ENCODE measurements at regions of chr21 and their contacts with region 1.

Region 1: DNA sequence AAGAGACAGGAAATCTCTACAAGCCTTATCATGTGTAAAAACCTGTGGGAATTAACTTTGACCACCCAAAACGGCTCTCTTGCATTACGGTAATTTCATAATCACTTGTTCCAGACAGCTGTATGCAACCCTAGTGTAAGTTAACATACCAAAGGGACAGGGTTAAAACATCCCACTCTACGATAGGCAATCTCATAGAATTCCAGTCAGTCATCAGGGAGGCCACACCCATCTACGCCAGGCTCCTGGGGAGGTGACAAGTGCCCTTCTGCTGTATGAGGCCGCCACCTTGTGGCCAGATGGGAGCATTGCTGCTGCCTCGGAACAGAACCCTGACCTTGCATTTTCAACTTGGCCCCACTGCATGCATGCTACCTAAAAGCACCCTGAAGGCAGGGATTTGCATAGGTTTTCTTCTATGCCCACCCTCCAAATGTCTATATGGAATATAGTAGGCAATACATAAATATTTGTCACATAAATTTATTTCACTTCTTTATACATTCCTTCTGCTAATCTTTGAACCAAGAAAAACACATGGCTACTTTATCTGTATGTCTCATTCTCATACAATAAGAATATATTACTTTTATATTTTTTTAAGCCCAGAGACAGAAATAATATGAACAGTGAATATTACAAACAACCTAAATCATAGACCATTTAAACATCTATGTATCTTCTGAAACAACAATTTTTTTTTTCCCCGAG is 12.6 kb downstream of the HSF2BP start:
- DNase-seq: peak; percentile 93 to 96 (median 95)
- ATAC-seq: peak; percentile 97
- H3K4me3 ChIP-seq: no peak overlapping the region
- H3K27ac ChIP-seq: no peak overlapping the region
- H3K4me1 ChIP-seq: peaks cover 0 to 10% of the 10 kb centered on the region in 2 experiments; a peak in 2 of 5 replicates
- H3K27me3 ChIP-seq: peaks cover 11 to 21% of the 10 kb centered on the region in 2 experiments
- CTCF ChIP-seq: peak; percentile 97 to 100 (median 99)
- EP300 ChIP-seq: no peak; the same call in 1 of the 2 replicates
- POLR2A ChIP-seq: no peak
- RAD21 ChIP-seq: peak; percentile 98 to 99

Region 2: DNA sequence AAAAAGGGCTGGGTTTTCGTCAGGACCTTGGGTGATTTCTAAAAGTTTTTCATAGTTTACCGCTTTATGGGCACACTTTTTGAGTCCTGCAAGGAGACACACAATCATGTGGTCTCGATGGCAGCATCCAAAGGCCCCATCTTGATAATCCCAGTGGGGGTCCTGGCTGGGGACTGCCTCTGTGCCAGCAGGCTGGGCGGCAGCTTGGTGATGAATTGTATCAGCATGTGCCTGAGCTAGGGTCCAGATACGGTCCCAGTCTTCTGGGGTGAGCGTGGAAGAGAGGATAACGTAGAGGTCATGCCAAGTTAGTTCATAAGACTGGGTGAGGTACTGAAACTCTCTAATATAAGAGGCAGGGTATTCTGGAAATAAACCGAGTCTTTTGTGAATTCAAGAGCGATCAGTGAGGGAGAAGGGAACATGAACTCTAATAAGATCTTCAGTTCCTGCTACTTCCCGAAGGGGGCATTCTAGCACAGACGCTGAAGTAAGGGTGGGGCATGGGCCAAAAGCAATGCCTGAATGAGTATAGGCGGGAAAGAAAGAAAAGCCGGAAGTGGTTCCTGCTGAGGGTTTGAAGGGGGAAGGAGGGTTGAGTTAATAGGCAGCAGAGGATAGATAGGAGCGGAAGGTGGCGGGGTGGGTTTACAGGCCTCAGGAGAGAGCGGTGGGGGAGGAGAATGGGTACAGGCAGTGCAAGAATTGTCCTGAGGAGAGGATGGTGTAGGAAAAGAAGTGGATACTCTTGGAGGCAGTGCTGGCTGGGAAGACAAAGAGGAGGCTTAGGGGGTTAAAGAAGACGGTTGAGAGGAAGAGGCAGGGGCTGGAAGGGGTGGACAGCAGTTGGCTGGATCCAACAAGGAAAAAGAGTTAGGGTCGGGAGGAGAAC is 722.9 kb before region 1 on chr21:
- CTCF ChIA-PET with region 1: no interaction called
- POLR2A ChIA-PET with region 1: no interaction called
- in situ Hi-C with region 1: no loop called
- intact Hi-C with region 1: loop called (anchors 5 kb)
- DNase-seq: peak; percentile 90 to 98 (median 94)
- ATAC-seq: peak; percentile 97
- H3K4me3 ChIP-seq: no peak overlapping the region
- H3K27ac ChIP-seq: peak overlapping the region; percentile 79
- H3K4me1 ChIP-seq: peaks cover 30 to 36% of the 10 kb centered on the region in 2 experiments
- H3K27me3 ChIP-seq: no peaks in the 10 kb centered on the region
- CTCF ChIP-seq: peak; percentile 89 to 97 (median 93)
- EP300 ChIP-seq: peak; percentile 69
- POLR2A ChIP-seq: peak; percentile 82
- RAD21 ChIP-seq: peak; percentile 99

Region 3: DNA sequence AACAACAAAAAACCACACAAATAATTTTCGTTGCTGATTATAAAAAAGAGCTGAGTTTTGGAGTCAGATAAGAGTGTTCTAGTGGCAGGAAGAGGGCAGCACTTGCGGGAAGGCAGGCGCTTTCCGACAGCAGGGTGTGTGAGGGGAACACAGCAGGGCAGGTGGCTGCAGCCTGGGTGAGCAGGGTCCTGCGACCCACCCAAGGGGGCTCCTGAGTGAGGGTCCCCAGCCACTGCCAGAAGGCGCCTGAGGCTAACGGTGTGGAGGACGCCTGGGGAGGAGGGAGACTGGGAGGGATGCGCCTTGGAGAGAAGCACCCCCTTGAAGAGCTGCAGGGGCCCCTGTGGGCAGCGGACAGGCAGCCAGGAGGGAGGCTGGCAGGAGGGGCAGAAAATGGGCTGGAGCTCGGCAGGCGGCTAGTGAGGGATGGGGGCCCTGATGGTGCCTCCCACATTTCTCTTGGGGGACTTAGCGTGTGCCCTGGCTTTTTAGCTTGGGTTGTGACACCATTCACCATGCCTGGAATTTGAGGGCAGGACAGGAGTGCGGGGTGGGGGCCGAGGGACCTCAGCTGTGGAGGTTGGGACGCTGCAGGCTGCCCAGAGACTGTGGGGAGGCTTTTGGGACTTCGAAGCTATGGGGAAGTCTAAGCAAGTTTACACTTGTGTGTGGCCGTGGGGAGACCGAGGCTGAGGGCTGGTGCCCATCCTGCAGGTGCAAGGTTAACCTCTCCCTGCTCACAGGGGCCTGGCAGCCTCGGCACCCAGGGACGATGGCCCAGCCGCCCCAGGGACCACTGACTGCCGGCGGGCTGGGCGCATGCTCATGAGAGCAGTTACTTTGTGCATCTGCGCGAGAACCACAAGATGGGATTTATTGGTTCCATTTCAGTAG is 331.2 kb before region 1 on chr21:
- CTCF ChIA-PET with region 1: interaction called, 3 read pairs
- POLR2A ChIA-PET with region 1: no interaction called
- in situ Hi-C with region 1: no loop called
- intact Hi-C with region 1: loop called (anchors 2 kb)
- DNase-seq: no peak
- ATAC-seq: no peak
- H3K4me3 ChIP-seq: no peak overlapping the region
- H3K27ac ChIP-seq: no peak overlapping the region
- H3K4me1 ChIP-seq: peaks cover 0 to 7% of the 10 kb centered on the region in 2 experiments; a peak in 1 of 5 replicates
- H3K27me3 ChIP-seq: peaks cover 36 to 83% of the 10 kb centered on the region in 2 experiments; a peak in 4 of 5 replicates
- CTCF ChIP-seq: peak in 1 of 3 experiments; percentile 21; a peak in 1 of 6 replicates
- EP300 ChIP-seq: no peak
- POLR2A ChIP-seq: no peak
- RAD21 ChIP-seq: no peak

Region 4: DNA sequence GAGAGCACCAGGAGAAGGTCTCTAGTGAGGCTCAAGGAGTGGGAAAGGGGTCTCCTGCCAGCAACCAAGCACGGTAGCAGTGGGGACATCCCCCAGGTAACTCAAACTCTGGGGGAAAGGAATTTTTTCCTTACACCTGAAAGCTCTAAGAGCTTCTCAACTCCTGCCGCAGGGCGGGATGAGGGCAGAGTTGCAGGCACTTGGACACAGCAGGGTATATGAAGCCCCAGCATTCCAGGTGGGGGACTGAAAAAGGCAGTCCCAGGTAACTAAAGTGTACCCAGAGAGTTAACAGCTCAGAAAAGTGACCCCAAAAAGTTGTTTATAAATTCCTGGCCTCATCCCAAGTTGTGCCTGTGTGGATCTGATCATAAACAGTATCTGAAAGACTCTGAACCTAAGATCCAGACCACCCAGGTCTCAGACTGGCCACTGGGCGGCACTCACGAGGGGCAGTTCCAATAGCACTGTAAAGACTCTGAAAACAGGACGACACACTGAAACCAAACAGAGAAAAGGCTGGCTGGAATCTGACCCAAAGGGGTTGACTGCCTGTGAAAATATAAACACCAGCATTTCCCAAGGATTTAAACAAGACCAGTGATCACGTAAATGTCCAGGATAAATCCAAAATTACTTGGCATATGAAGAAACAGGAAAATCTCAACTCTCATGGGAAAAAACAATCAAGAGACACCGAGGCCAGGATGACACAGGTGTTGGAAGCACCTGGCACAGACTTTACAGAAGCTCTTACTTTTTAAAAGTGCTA is 34.9 kb before region 1 on chr21:
- CTCF ChIA-PET with region 1: no interaction called
- POLR2A ChIA-PET with region 1: interaction called, 3 read pairs
- in situ Hi-C with region 1: no loop called
- intact Hi-C with region 1: loop called (anchors 1 kb)
- DNase-seq: peak; percentile 68 to 80 (median 73)
- ATAC-seq: peak; percentile 99
- H3K4me3 ChIP-seq: no peak overlapping the region
- H3K27ac ChIP-seq: no peak overlapping the region
- H3K4me1 ChIP-seq: peaks cover 0 to 5% of the 10 kb centered on the region in 2 experiments; a peak in 3 of 5 replicates
- H3K27me3 ChIP-seq: peaks cover 9 to 13% of the 10 kb centered on the region in 2 experiments; a peak in 4 of 5 replicates
- CTCF ChIP-seq: peak; percentile 87 to 97 (median 90)
- EP300 ChIP-seq: 0 out of 2 replicates have a peak, but pooled peaks have one; percentile 9
- POLR2A ChIP-seq: no peak
- RAD21 ChIP-seq: peak; percentile 24 to 75; a peak in 2 of 4 replicates

Region 5: DNA sequence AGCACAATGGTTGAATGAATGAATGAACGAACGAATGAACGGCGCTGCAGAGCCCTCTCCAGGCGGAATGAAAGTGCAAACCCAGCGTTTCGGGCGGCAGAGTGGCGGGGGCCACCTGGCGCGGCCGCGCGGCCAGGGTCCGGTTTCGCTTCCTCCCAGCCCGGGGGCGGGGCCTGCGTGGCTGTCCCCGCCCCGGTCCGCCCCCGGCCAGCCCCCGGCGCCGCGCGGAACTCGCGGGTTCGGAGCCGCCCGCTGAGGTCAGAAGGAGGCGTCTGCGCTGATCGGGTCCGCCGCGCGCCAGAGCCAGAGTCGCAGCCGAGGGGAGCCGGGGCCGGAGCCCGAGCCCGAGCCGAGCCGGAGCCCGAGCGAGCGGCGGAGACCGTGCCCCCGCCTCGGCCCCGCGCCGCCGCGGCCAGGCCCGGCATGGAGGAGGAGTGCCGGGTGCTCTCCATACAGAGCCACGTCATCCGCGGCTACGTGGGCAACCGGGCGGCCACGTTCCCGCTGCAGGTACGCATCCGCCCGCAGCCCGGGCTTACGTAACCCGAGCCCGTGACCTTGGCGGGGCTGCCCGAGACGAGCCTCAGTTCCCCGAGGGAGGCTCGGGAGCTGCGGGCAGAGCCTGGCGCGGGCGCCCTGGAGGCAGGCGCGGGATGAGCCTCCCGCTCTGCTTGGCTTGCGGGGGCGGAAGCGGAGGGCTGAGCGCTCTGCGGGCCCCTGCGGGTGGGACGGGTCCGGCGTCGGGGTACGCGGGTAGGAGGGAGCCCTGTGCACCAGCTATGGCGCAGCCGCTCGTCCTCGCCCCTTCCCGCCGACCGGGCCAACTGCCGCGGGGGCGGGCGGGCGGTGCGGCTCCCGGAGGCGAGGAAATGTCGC is 72.4 kb after region 1 on chr21 and contains the start of gene PDXK:
- CTCF ChIA-PET with region 1: no interaction called
- POLR2A ChIA-PET with region 1: no interaction called
- in situ Hi-C with region 1: no loop called
- intact Hi-C with region 1: no loop called
- DNase-seq: peak; percentile 94 to 98 (median 96)
- ATAC-seq: peak; percentile 93
- H3K4me3 ChIP-seq: peak within 1 kb of the TSS; percentile 100
- H3K27ac ChIP-seq: peak within 1 kb of the TSS; percentile 97
- H3K4me1 ChIP-seq: peaks cover 29 to 46% of the 10 kb centered on the region in 2 experiments; a peak in 4 of 5 replicates
- H3K27me3 ChIP-seq: no peaks in the 10 kb centered on the region
- CTCF ChIP-seq: peak; percentile 30 to 78 (median 57); a peak in 4 of 6 replicates
- EP300 ChIP-seq: 0 out of 2 replicates have a peak, but pooled peaks have one; percentile 28
- POLR2A ChIP-seq: peak; percentile 78
- RAD21 ChIP-seq: no peak
- polyA plus RNA-seq, gene PDXK: 5.6 to 8.9 TPM

Measured in K562 (cell line).